ENCODE measurements at regions of chr2 and their contacts with region 1.

Region 1: DNA sequence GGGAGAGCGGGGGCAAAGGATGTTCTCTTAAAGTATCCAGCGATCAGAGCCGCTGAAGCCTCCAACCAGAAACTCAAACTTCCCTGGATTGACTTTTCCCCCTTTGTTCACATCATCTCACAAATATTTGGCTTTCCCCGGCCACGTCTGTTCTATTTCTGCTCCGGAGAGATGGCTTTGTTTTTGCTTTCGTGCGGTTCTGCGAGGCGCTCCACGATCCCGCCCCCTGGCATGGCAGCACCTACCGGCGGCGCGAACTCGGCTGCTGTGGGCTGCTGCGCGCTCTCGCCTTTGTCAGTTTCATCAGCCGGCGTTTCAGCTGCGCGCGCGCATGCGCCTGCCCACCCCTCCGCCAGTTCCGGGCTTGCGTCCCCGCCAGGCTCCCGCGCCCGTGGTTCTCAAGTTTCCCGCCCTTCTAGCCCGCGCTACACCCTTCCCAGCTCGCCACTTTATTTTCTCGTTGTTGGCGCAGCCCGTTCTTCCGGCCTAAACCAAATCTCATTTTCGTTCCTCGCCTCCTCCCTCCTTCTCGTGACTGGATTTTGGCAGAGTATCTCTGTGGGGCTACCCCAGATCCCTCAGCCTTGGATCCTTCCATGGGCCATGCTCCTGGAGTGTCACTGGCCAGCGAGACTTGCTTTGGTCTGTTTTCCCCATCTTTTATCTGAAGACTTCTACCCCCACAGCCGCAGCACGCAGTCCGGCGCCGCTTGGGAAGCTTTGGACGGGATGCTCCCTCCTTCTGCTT is 98.0 kb downstream of the INSIG2 start:
- DNase-seq: peak; percentile 68
- ATAC-seq: peak; percentile 76
- H3K4me3 ChIP-seq: peak overlapping the region; percentile 74
- H3K27ac ChIP-seq: peak overlapping the region; percentile 64
- H3K4me1 ChIP-seq: peaks cover 29% of the 10 kb centered on the region
- H3K27me3 ChIP-seq: no peaks in the 10 kb centered on the region
- CTCF ChIP-seq: no peak

Region 2: GRCh38 chr2:118088051-118089024 is 97.9 kb before region 1 on chr2 and contains the start of gene INSIG2:
- CTCF ChIA-PET with region 1: interaction called, 3 read pairs
- POLR2A ChIA-PET with region 1: no interaction called
- intact Hi-C with region 1: loop called (anchors 1 kb)
- DNase-seq: peak; percentile 98
- ATAC-seq: peak; percentile 88
- H3K4me3 ChIP-seq: peak within 1 kb of the TSS; percentile 88
- H3K27ac ChIP-seq: peak within 1 kb of the TSS; percentile 57
- H3K4me1 ChIP-seq: peaks cover 43% of the 10 kb centered on the region
- H3K27me3 ChIP-seq: no peaks in the 10 kb centered on the region
- CTCF ChIP-seq: no peak
- total RNA-seq, gene INSIG2: 7.4 and 8.5 TPM in 2 replicates

Region 3: DNA sequence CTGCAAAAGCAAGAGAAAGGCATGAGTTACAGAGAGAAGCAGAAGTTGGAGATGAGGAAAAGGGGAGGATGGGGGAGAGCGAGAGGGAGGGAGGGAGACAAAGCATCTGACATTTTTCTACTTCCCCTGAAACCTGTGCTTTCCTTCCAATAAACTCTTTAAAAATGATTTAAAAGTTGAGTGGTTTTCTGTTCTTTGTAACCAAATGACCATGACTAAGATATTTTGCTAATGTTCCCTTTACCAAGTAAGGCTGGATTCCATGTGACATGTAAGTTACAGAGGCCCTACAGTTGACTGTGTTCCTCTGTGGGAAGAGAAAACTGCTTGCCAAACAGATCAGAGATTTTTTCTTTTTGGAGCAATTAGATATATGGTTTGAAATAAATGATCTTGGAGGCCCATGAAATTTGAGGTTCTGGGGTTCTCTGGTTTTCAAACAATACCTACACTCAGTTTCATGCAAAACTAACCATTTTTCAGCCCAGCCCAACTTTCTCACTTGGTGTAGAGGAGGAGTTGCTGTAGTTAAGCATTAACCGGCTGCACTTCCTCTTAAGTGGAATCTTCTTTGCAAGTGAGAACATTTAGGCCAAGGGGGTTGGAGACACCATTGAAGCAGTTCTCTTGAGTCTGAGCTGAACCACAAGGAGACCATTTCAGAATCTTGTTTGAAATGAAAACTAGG is 63.5 kb before region 1 on chr2:
- CTCF ChIA-PET with region 1: no interaction called
- POLR2A ChIA-PET with region 1: interaction called, 7 read pairs
- intact Hi-C with region 1: loop called (anchors 1 kb)
- DNase-seq: peak; percentile 59
- ATAC-seq: peak; percentile 17; the same call in 1 of the 2 replicates
- H3K4me3 ChIP-seq: peak overlapping the region; percentile 25; the same call in 1 of the 2 replicates
- H3K27ac ChIP-seq: peak overlapping the region; percentile 99
- H3K4me1 ChIP-seq: peaks cover 57% of the 10 kb centered on the region
- H3K27me3 ChIP-seq: no peaks in the 10 kb centered on the region
- CTCF ChIP-seq: no peak

Region 4: DNA sequence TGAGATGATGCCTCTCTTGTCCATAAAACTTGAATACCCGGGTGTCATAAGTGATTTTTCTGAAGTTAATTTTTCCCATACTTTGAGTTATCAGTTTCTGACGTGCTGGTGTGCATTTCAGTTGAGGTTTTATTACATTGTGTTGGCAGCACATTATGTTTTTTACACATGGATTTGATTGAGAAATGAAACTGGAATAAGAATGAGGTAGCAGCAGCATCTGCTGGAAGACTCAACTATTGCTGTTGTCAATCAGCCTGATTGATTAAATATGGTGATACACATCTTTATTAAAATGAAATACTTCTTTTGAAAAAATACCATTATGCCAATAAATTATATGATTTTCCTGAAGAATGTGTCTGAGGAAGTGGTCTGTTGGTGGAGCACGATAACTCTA is 37.5 kb before region 1 on chr2:
- CTCF ChIA-PET with region 1: no interaction called
- POLR2A ChIA-PET with region 1: interaction called, 14 read pairs
- intact Hi-C with region 1: no loop called
- DNase-seq: no peak
- ATAC-seq: no peak
- H3K4me3 ChIP-seq: no peak overlapping the region
- H3K27ac ChIP-seq: no peak overlapping the region
- H3K4me1 ChIP-seq: peaks cover 17% of the 10 kb centered on the region
- H3K27me3 ChIP-seq: no peaks in the 10 kb centered on the region
- CTCF ChIP-seq: no peak; the same call in 1 of the 2 replicates